ENCODE measurements at regions of chr9 and their contacts with region 1.

Region 1: GRCh38 chr9:33816327-33817252 is at the start of gene UBE2R2:
- DNase-seq: peak; percentile 87 to 88
- H3K4me3 ChIP-seq: peak within 1 kb of the TSS; percentile 58 to 90 (median 62)
- H3K27ac ChIP-seq: peak within 1 kb of the TSS; percentile 97 to 99 (median 97)
- H3K4me1 ChIP-seq: peaks cover 28 to 33% of the 10 kb centered on the region in 2 donors
- H3K27me3 ChIP-seq: no peaks in the 10 kb centered on the region
- CTCF ChIP-seq: no peak
- POLR2A ChIP-seq: peak; percentile 46 to 72
- total RNA-seq, gene UBE2R2: 22.8 to 31.4 (median 25.8) TPM

Region 2: GRCh38 chr9:33852216-33852826 is 35.7 kb after region 1 on chr9:
- intact Hi-C with region 1: loop called (anchors 5 kb)
- DNase-seq: peak; percentile 81 to 84
- H3K4me3 ChIP-seq: no peak overlapping the region
- H3K27ac ChIP-seq: peak overlapping the region in 1 of 3 donors; percentile 52
- H3K4me1 ChIP-seq: peaks cover 42 to 43% of the 10 kb centered on the region in 2 donors
- H3K27me3 ChIP-seq: no peaks in the 10 kb centered on the region
- CTCF ChIP-seq: peak; percentile 24 to 81 (median 66)
- POLR2A ChIP-seq: no peak

Region 3: GRCh38 chr9:34048923-34049697 is 232.5 kb after region 1 on chr9:
- intact Hi-C with region 1: loop called (anchors 10 kb)
- DNase-seq: peak; percentile 98
- H3K4me3 ChIP-seq: peak overlapping the region; percentile 49 to 83 (median 81)
- H3K27ac ChIP-seq: peak overlapping the region; percentile 89 to 97 (median 94)
- H3K4me1 ChIP-seq: peaks cover 24 to 30% of the 10 kb centered on the region in 2 donors
- H3K27me3 ChIP-seq: no peaks in the 10 kb centered on the region
- CTCF ChIP-seq: peak in 1 of 6 experiments; percentile 16
- POLR2A ChIP-seq: no peak

Region 4: GRCh38 chr9:34072868-34073590 is 256.4 kb after region 1 on chr9:
- intact Hi-C with region 1: loop called (anchors 10 kb)
- DNase-seq: peak; percentile 51 to 59
- H3K4me3 ChIP-seq: no peak overlapping the region
- H3K27ac ChIP-seq: peak overlapping the region; percentile 55 to 76 (median 57)
- H3K4me1 ChIP-seq: peaks cover 7 to 16% of the 10 kb centered on the region in 2 donors
- H3K27me3 ChIP-seq: no peaks in the 10 kb centered on the region
- CTCF ChIP-seq: no peak
- POLR2A ChIP-seq: no peak